Endothelial cell of umbilical vein (primary cell): ENCODE measurements at regions of chr2 and their contacts with region 1.

Region 1: GRCh38 chr2:194526121-194526520 is 1130.9 kb upstream of the SLC39A10 start:
- DNase-seq: no peak
- H3K4me3 ChIP-seq: no peak overlapping the region
- H3K27ac ChIP-seq: no peak overlapping the region
- H3K4me1 ChIP-seq: no peaks in the 10 kb centered on the region
- H3K27me3 ChIP-seq: no peaks in the 10 kb centered on the region
- CTCF ChIP-seq: no peak
- POLR2A ChIP-seq: no peak

Region 2: GRCh38 chr2:194289712-194290346 is 236.3 kb before region 1 on chr2:
- CTCF ChIA-PET with region 1: no interaction called
- POLR2A ChIA-PET with region 1: no interaction called
- dilution Hi-C with region 1: no loop called
- intact Hi-C with region 1: no loop called
- DNase-seq: no peak
- H3K4me3 ChIP-seq: no peak overlapping the region
- H3K27ac ChIP-seq: no peak overlapping the region
- H3K4me1 ChIP-seq: no peaks in the 10 kb centered on the region
- H3K27me3 ChIP-seq: no peaks in the 10 kb centered on the region
- CTCF ChIP-seq: no peak
- POLR2A ChIP-seq: no peak

Region 3: DNA sequence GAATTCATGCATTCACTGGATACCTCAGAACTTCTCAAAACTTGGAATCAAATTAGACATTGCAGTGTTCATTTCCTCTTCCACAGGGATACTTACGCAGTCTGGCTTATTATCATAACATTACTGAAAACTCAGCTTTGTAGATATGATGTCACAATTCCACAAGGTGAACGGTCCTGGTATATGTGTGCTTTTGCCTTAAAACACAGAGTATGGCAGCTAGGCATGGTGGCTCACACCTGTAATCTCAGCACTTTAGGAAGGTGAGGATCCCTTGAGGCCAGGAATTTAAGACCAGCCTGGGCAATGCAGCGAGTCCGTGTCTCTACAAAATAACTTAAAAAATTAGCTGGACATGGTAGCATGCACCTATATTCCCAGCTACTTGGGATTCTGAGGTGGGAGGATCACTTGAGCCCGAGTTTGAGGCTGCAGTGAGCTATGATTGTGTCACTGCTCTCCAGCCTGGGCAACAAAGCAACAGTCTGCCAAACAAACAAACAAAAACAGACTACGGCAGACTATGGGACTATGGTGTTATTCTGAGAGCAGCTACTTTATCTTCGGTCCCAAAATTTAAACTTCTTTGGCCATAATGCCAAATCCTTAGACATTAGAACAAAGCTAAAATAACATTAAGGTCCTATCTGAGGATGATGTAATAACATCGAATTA is 61.0 kb before region 1 on chr2:
- CTCF ChIA-PET with region 1: no interaction called
- POLR2A ChIA-PET with region 1: no interaction called
- dilution Hi-C with region 1: no loop called
- intact Hi-C with region 1: loop called (anchors 2 kb)
- DNase-seq: no peak
- H3K4me3 ChIP-seq: no peak overlapping the region
- H3K27ac ChIP-seq: no peak overlapping the region
- H3K4me1 ChIP-seq: no peaks in the 10 kb centered on the region
- H3K27me3 ChIP-seq: no peaks in the 10 kb centered on the region
- CTCF ChIP-seq: no peak
- POLR2A ChIP-seq: no peak

Region 4: DNA sequence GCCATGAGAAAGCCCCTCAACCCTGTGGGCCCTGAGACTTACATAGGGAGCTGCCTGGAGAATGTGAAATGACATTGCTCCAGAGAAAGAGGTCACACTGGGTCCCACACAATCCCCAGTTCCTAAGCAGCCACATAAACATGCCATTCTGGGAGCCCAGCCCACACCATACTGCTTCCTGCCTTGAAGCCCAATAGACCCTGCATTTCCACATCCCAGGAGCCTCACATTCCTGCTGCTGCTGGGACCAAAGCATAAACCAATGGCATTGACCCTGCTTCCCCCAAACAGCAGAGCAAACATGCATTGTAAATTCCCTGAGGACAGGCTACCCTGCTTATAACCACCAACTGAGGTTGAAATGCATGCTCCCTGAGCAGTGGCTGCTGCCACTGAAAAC is 13.3 kb after region 1 on chr2:
- CTCF ChIA-PET with region 1: no interaction called
- POLR2A ChIA-PET with region 1: no interaction called
- dilution Hi-C with region 1: no loop called
- intact Hi-C with region 1: no loop called
- DNase-seq: no peak
- H3K4me3 ChIP-seq: no peak overlapping the region
- H3K27ac ChIP-seq: no peak overlapping the region
- H3K4me1 ChIP-seq: no peaks in the 10 kb centered on the region
- H3K27me3 ChIP-seq: no peaks in the 10 kb centered on the region
- CTCF ChIP-seq: no peak
- POLR2A ChIP-seq: no peak

Region 5: DNA sequence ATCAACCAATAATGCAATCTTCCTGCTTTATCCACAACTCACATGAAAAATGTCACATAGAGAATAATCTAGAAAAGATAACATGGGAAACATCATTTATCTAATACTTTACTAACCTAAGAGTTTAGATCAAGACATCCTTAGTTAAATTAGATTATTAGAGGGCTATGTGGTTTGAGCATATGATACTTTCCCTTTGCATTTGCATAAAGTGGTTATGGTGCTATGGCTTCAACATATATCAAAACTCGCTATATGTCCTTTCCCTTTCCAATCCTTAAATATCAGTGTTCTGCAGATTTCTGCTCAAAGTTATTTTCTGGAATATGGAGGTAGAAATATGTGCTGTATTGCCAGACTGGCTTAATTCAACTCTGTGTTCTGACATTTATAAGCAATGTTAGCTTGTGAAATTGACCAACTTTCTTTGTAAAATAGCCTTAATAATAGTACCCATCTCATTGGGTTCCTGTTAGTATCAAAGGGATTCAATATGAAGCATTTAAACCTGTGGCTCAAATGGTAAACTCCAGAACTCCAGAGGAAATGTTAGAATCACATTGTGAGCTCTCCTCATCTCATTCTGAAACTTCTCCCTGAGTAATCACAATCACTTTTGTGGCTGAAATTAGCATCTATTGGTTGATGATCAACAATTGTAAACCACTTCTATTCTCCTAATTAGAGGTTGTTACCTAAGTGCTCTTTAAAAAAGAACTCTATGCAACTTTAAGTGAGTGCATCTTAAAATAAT is 41.0 kb after region 1 on chr2:
- CTCF ChIA-PET with region 1: no interaction called
- POLR2A ChIA-PET with region 1: no interaction called
- dilution Hi-C with region 1: no loop called
- intact Hi-C with region 1: no loop called
- DNase-seq: no peak
- H3K4me3 ChIP-seq: no peak overlapping the region
- H3K27ac ChIP-seq: no peak overlapping the region
- H3K4me1 ChIP-seq: no peaks in the 10 kb centered on the region
- H3K27me3 ChIP-seq: no peaks in the 10 kb centered on the region
- CTCF ChIP-seq: no peak
- POLR2A ChIP-seq: no peak